ENCODE measurements at regions of chr19 and their contacts with region 1.

Region 1: GRCh38 chr19:17282488-17283255 is 971 bp downstream of the ANKLE1 start:
- DNase-seq: peak; percentile 90
- ATAC-seq: peak; percentile 96
- H3K4me3 Mint-ChIP-seq: peak overlapping the region; percentile 73
- H3K27ac Mint-ChIP-seq: peak overlapping the region; percentile 59
- H3K4me1 Mint-ChIP-seq: peaks cover 8% of the 10 kb centered on the region
- H3K27me3 Mint-ChIP-seq: peaks cover 3% of the 10 kb centered on the region

Region 2: DNA sequence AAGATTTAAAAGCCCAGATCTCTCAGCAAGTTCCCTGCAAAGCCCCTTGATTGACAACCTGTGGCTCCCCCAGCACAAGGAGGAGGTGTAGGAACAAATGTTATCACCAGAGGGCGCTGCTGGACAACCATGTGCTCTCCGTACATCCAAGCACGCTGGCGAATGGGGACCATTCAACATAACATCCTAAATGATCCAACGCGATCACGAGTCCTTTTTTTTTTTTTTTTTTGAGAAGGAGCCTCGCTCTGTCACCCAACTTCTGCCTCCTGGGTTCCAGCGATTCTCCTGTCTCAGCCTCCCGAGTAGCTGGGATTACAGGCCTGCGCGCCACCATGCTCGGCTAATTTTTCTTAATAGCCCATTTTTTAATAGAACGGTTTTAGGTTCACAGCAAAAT is 511.1 kb before region 1 on chr19:
- CTCF ChIA-PET with region 1: no interaction called
- POLR2A ChIA-PET with region 1: no interaction called
- intact Hi-C with region 1: loop called in 1 of 2 experiments (anchors 1 kb)
- DNase-seq: peak; percentile 86
- ATAC-seq: peak; percentile 77
- H3K4me3 Mint-ChIP-seq: no peak overlapping the region
- H3K27ac Mint-ChIP-seq: no peak overlapping the region
- H3K4me1 Mint-ChIP-seq: no peaks in the 10 kb centered on the region
- H3K27me3 Mint-ChIP-seq: peaks cover 35% of the 10 kb centered on the region

Region 3: GRCh38 chr19:16778796-16779411 is 503.8 kb before region 1 on chr19:
- CTCF ChIA-PET with region 1: no interaction called
- POLR2A ChIA-PET with region 1: no interaction called
- intact Hi-C with region 1: loop called in 1 of 2 experiments (anchors 2 kb)
- DNase-seq: peak; percentile 73
- ATAC-seq: peak; percentile 74
- H3K4me3 Mint-ChIP-seq: no peak overlapping the region
- H3K27ac Mint-ChIP-seq: no peak overlapping the region
- H3K4me1 Mint-ChIP-seq: no peaks in the 10 kb centered on the region
- H3K27me3 Mint-ChIP-seq: peaks cover 12% of the 10 kb centered on the region

Region 4: DNA sequence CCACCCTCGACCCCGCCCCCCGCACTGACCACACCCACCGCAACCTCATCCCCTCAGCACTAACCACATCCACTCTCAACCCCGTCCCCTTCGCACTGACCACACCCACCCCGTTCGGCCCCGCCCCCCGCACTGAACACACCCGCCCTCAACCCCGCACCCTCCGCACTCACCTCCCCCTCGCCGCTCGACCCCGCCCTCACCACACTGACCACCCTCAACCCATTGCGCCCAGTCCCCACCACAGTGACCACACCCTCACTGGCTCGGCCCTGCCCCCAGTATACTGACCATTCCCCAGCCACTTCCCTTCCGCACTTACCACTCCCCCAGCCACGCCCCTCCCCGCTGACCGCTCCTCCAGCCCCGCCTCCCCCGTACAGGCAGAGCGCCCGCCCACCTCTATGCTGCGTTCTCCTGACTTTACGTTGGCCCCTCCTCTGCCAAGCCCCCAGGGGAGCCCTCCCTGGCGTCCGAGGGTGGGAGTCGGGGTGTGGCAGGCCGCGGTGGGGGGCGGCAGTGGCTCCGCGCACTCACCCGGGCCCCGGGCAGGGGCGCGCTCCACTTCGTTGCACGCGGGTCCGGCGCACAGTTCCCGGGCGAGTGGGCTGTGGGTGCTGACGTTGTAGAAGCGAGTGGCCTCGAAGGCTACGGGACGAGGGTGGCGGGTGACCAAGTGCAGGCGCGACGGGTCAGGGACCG is 385.4 kb before region 1 on chr19:
- CTCF ChIA-PET with region 1: no interaction called
- POLR2A ChIA-PET with region 1: no interaction called
- intact Hi-C with region 1: no loop called
- DNase-seq: peak; percentile 75
- ATAC-seq: peak; percentile 53
- H3K4me3 Mint-ChIP-seq: no peak overlapping the region
- H3K27ac Mint-ChIP-seq: no peak overlapping the region
- H3K4me1 Mint-ChIP-seq: peaks cover 16% of the 10 kb centered on the region
- H3K27me3 Mint-ChIP-seq: peaks cover 26% of the 10 kb centered on the region

Region 5: GRCh38 chr19:17069218-17069617 is 213.5 kb before region 1 on chr19:
- CTCF ChIA-PET with region 1: interaction called, 3 read pairs
- POLR2A ChIA-PET with region 1: no interaction called
- intact Hi-C with region 1: loop called (anchors 1 kb)
- DNase-seq: no peak
- ATAC-seq: no peak
- H3K4me3 Mint-ChIP-seq: no peak overlapping the region
- H3K27ac Mint-ChIP-seq: no peak overlapping the region
- H3K4me1 Mint-ChIP-seq: peaks cover 49% of the 10 kb centered on the region
- H3K27me3 Mint-ChIP-seq: no peaks in the 10 kb centered on the region

Region 6: DNA sequence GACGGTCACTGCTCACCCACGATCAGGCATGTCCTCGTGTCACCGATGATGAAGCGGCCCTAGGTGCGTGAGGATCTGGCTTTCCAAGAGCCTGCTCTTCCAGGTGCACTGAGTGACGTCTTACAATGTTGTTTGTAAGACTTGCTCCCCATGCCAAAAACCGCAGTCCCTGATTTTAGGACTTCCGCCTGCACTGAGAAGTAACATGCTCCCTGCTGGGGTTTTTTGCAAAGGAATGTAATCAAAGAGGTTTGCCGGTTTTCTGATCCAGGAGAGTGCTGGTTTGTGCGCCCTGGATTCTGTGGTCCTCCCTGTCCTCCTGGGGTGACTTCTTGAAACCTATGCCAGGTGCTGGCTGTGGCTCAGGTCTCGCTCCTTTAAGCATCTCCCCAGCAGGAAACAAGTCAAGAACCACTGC is 168.2 kb before region 1 on chr19:
- CTCF ChIA-PET with region 1: no interaction called
- POLR2A ChIA-PET with region 1: no interaction called
- intact Hi-C with region 1: no loop called
- DNase-seq: no peak
- ATAC-seq: no peak
- H3K4me3 Mint-ChIP-seq: no peak overlapping the region
- H3K27ac Mint-ChIP-seq: no peak overlapping the region
- H3K4me1 Mint-ChIP-seq: peaks cover 10% of the 10 kb centered on the region
- H3K27me3 Mint-ChIP-seq: no peaks in the 10 kb centered on the region

Region 7: DNA sequence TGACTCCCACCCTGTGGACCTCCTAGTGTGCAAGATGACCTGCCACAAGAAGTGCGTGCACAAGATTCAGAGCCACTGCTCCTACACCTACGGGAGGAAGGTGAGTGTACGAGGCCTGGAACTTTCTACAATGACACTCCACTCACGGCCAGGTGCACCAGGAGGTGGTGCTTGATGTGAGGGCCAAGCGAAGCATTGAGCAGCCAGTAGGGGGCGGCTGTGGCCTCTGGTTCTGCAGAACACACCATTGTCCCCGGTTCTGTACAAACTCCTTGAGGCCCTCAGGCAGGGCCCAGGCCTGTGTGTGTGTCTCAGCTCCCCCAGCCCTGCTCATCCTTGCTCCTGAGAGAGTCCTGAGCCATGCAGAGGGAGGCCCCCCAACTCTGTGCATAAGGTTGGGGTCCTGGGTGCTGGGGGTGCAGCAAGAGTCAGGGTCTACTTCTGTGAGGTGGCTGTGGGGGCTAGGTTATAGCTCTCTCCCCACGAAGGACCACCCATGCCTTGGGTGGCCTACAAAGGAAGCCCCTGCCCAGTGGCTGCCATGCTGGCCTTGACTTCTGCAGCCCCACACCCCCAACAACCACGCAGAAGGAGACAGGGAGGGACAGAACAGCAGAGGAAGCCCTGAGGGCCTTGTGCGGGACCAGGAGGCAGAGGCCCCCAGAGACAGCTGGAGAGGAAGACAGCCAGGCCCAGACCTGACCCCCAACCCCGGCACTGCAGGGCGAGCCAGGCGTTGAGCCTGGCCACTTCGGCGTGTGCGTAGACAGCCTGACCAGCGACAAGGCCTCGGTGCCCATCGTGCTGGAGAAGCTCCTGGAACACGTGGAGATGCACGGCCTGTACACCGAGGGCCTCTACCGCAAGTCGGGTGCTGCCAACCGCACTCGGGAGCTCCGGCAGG is 77.2 kb before region 1 on chr19:
- CTCF ChIA-PET with region 1: no interaction called
- POLR2A ChIA-PET with region 1: no interaction called
- intact Hi-C with region 1: loop called (anchors 1 kb)
- DNase-seq: peak; percentile 79
- ATAC-seq: peak; percentile 66
- H3K4me3 Mint-ChIP-seq: no peak overlapping the region
- H3K27ac Mint-ChIP-seq: no peak overlapping the region
- H3K4me1 Mint-ChIP-seq: peaks cover 9% of the 10 kb centered on the region
- H3K27me3 Mint-ChIP-seq: no peaks in the 10 kb centered on the region

Region 8: GRCh38 chr19:17260842-17261325 is 21.8 kb before region 1 on chr19:
- CTCF ChIA-PET with region 1: interaction called, 45 read pairs
- POLR2A ChIA-PET with region 1: interaction called, 3 read pairs
- intact Hi-C with region 1: loop called (anchors 1 kb)
- DNase-seq: peak; percentile 96
- ATAC-seq: peak; percentile 100
- H3K4me3 Mint-ChIP-seq: no peak overlapping the region
- H3K27ac Mint-ChIP-seq: peak overlapping the region; percentile 56
- H3K4me1 Mint-ChIP-seq: peaks cover 6% of the 10 kb centered on the region
- H3K27me3 Mint-ChIP-seq: no peaks in the 10 kb centered on the region

Region 9: GRCh38 chr19:17479325-17479791 is 196.7 kb after region 1 on chr19:
- CTCF ChIA-PET with region 1: no interaction called
- POLR2A ChIA-PET with region 1: no interaction called
- intact Hi-C with region 1: no loop called
- DNase-seq: no peak
- ATAC-seq: no peak
- H3K4me3 Mint-ChIP-seq: no peak overlapping the region
- H3K27ac Mint-ChIP-seq: no peak overlapping the region
- H3K4me1 Mint-ChIP-seq: no peaks in the 10 kb centered on the region
- H3K27me3 Mint-ChIP-seq: no peaks in the 10 kb centered on the region

Measured in activated CD4-positive, alpha-beta T cell treated with anti-CD3 and anti-CD28 coated beads for 36 hours (primary cell).